CD14-positive monocyte (primary cell): ENCODE measurements at regions of chr7 and their contacts with region 1.

Region 1: DNA sequence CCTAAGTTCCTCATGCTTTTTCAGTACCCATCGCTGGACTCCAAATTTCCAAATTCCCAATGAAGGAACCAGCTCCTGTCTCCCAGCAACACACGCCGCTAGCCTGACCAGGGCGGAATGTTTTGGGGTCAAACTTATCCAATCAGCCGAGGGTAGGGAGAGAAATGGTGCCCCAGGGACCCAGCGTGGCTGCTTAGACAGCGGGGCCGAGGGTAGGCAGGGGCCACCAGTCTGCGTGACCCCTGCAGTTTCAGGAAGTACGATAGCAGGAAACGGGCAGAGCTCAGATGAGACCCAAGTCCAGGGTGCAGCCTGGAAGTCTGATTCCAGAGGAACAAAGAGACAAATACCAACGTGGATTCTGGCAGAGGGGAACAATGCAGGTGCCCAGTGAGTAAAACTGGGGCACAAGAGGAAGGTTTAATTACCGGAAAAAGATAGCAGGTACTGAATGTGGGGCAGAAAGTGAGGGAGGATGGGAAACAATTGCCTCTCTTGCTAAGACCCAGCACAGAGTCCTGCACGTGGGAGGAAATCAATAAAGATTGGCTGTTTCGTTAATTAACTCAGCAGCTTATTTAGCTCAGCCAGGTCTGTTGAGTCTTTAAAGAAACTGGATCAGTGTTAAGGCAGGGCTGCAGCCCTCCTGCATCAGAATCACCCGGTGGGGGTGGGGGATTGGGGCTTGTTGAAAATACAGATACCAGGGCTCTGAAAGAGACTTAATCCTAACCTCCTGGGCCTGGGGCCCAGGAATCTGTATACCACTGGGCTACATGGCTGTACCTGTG is 50.4 kb upstream of the NFE2L3 start:
- DNase-seq: peak; percentile 50 to 82 (median 71)
- H3K4me3 ChIP-seq: peak overlapping the region; percentile 43 to 75 (median 50)
- H3K4me3 Mint-ChIP-seq: peak overlapping the region in 1 of 2 donors; percentile 81
- H3K27ac ChIP-seq: peak overlapping the region; percentile 93 to 99
- H3K27ac Mint-ChIP-seq: peak overlapping the region in 6 of 7 donors; percentile 97 to 98 (median 98)
- H3K4me1 ChIP-seq: peaks cover 90 to 94% of the 10 kb centered on the region in 2 donors
- H3K4me1 Mint-ChIP-seq: peaks cover 62% of the 10 kb centered on the region
- H3K27me3 ChIP-seq: no peaks in the 10 kb centered on the region
- H3K27me3 Mint-ChIP-seq: peaks cover 0 to 4% (median 0%) of the 10 kb centered on the region in 3 donors
- CTCF ChIP-seq: no peak

Region 2: GRCh38 chr7:25839084-25839769 is 262.3 kb before region 1 on chr7:
- intact Hi-C with region 1: no loop called
- DNase-seq: no peak
- H3K4me3 ChIP-seq: no peak overlapping the region
- H3K4me3 Mint-ChIP-seq: no peak overlapping the region
- H3K27ac ChIP-seq: no peak overlapping the region
- H3K27ac Mint-ChIP-seq: no peak overlapping the region
- H3K4me1 ChIP-seq: no peaks in the 10 kb centered on the region
- H3K4me1 Mint-ChIP-seq: no peaks in the 10 kb centered on the region
- H3K27me3 ChIP-seq: peaks cover 8 to 10% of the 10 kb centered on the region in 2 donors
- H3K27me3 Mint-ChIP-seq: peaks cover 7 to 15% (median 11%) of the 10 kb centered on the region in 3 donors
- CTCF ChIP-seq: peak; percentile 14

Region 3: GRCh38 chr7:25913598-25914224 is 187.8 kb before region 1 on chr7:
- intact Hi-C with region 1: no loop called
- DNase-seq: no peak
- H3K4me3 ChIP-seq: no peak overlapping the region
- H3K4me3 Mint-ChIP-seq: no peak overlapping the region
- H3K27ac ChIP-seq: no peak overlapping the region
- H3K27ac Mint-ChIP-seq: no peak overlapping the region
- H3K4me1 ChIP-seq: no peaks in the 10 kb centered on the region
- H3K4me1 Mint-ChIP-seq: no peaks in the 10 kb centered on the region
- H3K27me3 ChIP-seq: peaks cover 14 to 22% of the 10 kb centered on the region in 2 donors
- H3K27me3 Mint-ChIP-seq: peaks cover 0 to 43% (median 27%) of the 10 kb centered on the region in 3 donors
- CTCF ChIP-seq: no peak

Region 4: GRCh38 chr7:26141077-26141476 is 39.5 kb after region 1 on chr7:
- intact Hi-C with region 1: no loop called
- DNase-seq: peak; percentile 48 to 70 (median 68)
- H3K4me3 ChIP-seq: no peak overlapping the region
- H3K4me3 Mint-ChIP-seq: no peak overlapping the region
- H3K27ac ChIP-seq: peak overlapping the region in 1 of 2 donors; percentile 24
- H3K27ac Mint-ChIP-seq: peak overlapping the region in 6 of 7 donors; percentile 17 to 91 (median 66)
- H3K4me1 ChIP-seq: peaks cover 43 to 45% of the 10 kb centered on the region in 2 donors
- H3K4me1 Mint-ChIP-seq: peaks cover 44% of the 10 kb centered on the region
- H3K27me3 ChIP-seq: no peaks in the 10 kb centered on the region
- H3K27me3 Mint-ChIP-seq: peaks cover 0 to 4% (median 2%) of the 10 kb centered on the region in 3 donors
- CTCF ChIP-seq: no peak

Region 5: DNA sequence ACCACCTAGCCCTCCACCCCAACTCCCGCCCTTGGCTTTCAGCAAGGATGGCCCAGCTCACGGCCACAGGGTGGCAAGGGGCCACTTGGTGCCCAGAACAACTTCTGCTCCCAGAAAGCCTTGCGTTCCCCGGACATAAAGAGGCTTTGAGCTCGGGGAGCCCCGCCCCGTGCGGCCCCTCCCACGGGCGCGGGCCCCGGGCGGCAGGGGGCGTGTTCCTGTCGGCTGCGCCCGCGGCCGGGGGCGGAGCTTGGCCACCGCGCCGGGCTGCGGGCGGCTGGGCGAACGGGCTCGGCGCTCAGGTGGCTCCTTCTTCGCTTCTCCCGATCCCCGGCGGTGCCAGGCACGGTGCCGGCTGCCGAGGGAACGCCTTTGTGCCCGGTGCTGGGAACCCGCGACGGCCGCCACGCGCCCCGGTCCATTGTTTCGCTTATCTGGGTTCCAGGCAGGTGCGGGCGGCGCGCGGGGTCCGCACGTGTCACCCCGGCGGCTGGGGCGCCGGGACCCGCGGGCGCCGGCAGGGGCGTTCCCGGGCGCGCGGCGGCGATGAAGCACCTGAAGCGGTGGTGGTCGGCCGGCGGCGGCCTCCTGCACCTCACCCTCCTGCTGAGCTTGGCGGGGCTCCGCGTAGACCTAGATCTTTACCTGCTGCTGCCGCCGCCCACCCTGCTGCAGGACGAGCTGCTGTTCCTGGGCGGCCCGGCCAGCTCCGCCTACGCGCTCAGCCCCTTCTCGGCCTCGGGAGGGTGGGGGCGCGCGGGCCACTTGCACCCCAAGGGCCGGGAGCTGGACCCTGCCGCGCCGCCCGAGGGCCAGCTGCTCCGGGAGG is 50.6 kb after region 1 on chr7 and contains the start of gene NFE2L3:
- intact Hi-C with region 1: loop called (anchors 5 kb)
- DNase-seq: peak; percentile 83 to 84 (median 84)
- H3K4me3 ChIP-seq: peak within 1 kb of the TSS; percentile 28 to 75 (median 65)
- H3K4me3 Mint-ChIP-seq: peak within 1 kb of the TSS; percentile 88 to 96
- H3K27ac ChIP-seq: peak within 1 kb of the TSS; percentile 19 to 58
- H3K27ac Mint-ChIP-seq: peak within 1 kb of the TSS; percentile 62 to 93 (median 84)
- H3K4me1 ChIP-seq: peaks cover 40 to 58% of the 10 kb centered on the region in 2 donors
- H3K4me1 Mint-ChIP-seq: peaks cover 49% of the 10 kb centered on the region
- H3K27me3 ChIP-seq: peaks cover 4 to 7% of the 10 kb centered on the region in 2 donors
- H3K27me3 Mint-ChIP-seq: peaks cover 11 to 24% (median 17%) of the 10 kb centered on the region in 3 donors
- CTCF ChIP-seq: no peak
- polyA plus RNA-seq, gene NFE2L3: 4.4 to 17.2 (median 10.6) TPM

Region 6: DNA sequence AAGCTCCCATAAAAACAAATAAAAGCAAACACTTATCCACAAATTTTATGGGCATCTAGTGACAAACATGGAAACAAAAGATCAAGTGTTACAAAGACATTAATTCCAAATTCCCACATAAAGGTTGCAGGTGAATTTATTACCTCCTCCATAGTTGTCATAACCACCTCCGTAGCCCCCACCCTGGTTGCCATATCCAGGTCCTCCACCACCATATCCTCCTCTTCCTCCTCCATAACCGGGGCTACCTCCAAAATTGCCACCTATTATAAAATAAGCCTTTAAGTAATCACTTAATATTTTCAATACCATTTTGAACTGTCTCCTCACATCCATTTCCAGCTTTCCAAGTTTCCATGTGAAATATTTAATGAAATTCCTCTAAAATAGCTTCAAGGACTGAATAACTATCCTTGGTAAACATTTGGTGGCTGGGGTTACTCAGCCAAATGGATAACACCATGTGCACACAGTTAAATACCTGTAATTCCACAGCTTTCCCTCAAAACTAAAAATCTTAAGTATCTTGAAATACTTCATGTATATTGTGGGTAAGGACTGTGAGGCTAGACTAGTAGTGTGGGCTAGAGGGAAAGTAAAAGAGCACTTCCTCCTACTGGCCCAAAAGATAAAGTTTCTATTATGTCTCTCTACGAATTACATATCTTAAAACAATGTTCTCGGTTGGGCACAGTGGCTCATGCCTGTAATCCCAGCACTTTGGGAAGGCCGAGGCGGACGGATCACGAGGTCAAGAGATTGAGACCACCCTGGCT is 92.1 kb after region 1 on chr7:
- intact Hi-C with region 1: loop called in 1 of 2 experiments (anchors 5 kb)
- DNase-seq: no peak
- H3K4me3 ChIP-seq: no peak overlapping the region
- H3K4me3 Mint-ChIP-seq: peak overlapping the region in 1 of 2 donors; percentile 21
- H3K27ac ChIP-seq: peak overlapping the region in 1 of 2 donors; percentile 21
- H3K27ac Mint-ChIP-seq: peak overlapping the region; percentile 26 to 83 (median 74)
- H3K4me1 ChIP-seq: peaks cover 46 to 57% of the 10 kb centered on the region in 2 donors
- H3K4me1 Mint-ChIP-seq: peaks cover 58% of the 10 kb centered on the region
- H3K27me3 ChIP-seq: no peaks in the 10 kb centered on the region
- H3K27me3 Mint-ChIP-seq: no peaks in the 10 kb centered on the region
- CTCF ChIP-seq: no peak